Endothelial cell of umbilical vein (primary cell): ENCODE measurements at regions of chr21 and their contacts with region 1.

Region 1: DNA sequence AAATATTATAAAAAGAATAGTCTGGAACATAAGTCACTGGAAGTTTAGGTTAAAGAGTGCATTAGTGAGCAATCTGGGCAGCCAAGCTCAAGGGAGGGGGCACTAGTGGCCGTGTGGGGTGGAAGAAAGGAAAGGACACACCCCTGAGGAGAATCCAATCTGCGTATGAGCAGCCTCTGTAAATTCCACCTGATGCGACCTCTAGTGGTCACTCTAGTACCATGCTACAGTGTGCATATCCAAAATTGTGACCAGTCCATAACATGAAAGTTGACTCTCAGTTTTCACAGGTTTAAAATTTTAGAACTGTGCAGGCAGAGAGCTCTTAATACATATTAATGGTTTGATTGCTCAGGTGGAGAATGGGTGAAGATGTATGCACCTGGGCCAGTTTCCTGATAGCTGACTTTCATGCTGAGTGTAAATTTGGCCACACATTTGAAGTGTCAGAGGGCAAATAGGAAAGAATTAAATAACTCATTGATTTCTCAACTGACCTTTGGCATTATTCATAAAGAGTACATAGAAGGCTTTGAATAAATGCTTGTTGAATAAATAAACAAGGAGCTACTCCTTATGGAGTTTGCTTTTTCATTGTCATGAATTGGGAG is 105.9 kb upstream of the C21orf91 start:
- DNase-seq: peak; percentile 42
- H3K4me3 ChIP-seq: no peak overlapping the region
- H3K27ac ChIP-seq: no peak overlapping the region
- H3K4me1 ChIP-seq: no peaks in the 10 kb centered on the region
- H3K27me3 ChIP-seq: no peaks in the 10 kb centered on the region
- CTCF ChIP-seq: peak; percentile 79 to 80
- POLR2A ChIP-seq: no peak

Region 2: GRCh38 chr21:17679002-17679600 is 246.0 kb before region 1 on chr21:
- CTCF ChIA-PET with region 1: interaction called, 18 read pairs
- POLR2A ChIA-PET with region 1: no interaction called
- dilution Hi-C with region 1: no loop called
- intact Hi-C with region 1: loop called (anchors 1 kb)
- DNase-seq: peak; percentile 61
- H3K4me3 ChIP-seq: no peak overlapping the region
- H3K27ac ChIP-seq: no peak overlapping the region
- H3K4me1 ChIP-seq: no peaks in the 10 kb centered on the region
- H3K27me3 ChIP-seq: no peaks in the 10 kb centered on the region
- CTCF ChIP-seq: peak; percentile 55 to 57
- POLR2A ChIP-seq: no peak

Region 3: DNA sequence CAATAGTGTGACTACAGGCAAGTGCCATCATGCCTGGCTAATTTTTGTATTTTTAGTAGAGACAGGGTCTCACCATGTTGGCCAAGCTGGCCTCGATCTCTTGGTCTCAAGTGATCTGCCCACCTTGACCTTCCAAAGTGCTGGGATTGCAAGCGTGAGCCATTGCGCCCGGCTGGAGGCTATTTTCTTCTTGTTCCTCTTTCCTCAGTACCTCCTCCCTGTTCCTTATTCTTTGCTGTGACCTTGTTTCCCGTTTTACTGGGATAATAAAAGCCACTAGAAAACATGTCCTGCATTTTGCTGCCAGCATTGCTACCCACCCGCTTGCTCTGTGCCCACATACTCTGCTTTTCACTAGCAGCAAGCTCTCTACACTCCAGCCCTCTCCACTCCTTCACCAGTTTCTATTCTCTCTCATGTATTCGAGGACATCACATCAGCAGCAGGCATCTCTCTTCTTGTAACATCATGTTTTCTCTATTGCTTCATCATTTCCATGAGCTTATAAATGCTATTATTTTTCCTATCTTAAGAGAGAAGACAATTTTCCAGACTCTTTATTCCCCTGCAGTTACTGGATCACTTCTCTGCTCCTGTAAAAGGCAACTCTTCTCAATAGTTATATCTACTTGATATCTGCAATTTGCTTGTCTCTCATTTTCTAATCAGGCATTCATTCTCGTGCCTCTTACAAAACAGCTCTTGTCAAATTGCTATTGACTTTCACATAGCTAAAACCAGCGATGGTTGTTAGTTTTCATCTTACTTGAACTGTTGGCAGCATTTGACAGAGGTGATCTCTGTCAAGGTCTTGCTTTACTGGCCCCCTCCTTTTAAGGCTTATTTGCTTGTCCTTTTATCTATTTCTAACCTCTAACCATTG is 71.5 kb before region 1 on chr21:
- CTCF ChIA-PET with region 1: no interaction called
- POLR2A ChIA-PET with region 1: no interaction called
- dilution Hi-C with region 1: no loop called
- intact Hi-C with region 1: no loop called
- DNase-seq: no peak
- H3K4me3 ChIP-seq: no peak overlapping the region
- H3K27ac ChIP-seq: no peak overlapping the region
- H3K4me1 ChIP-seq: no peaks in the 10 kb centered on the region
- H3K27me3 ChIP-seq: no peaks in the 10 kb centered on the region
- CTCF ChIP-seq: no peak
- POLR2A ChIP-seq: no peak

Region 4: GRCh38 chr21:17889171-17889570 is 35.9 kb before region 1 on chr21:
- CTCF ChIA-PET with region 1: no interaction called
- POLR2A ChIA-PET with region 1: no interaction called
- dilution Hi-C with region 1: no loop called
- intact Hi-C with region 1: no loop called
- DNase-seq: no peak
- H3K4me3 ChIP-seq: no peak overlapping the region
- H3K27ac ChIP-seq: no peak overlapping the region
- H3K4me1 ChIP-seq: no peaks in the 10 kb centered on the region
- H3K27me3 ChIP-seq: no peaks in the 10 kb centered on the region
- CTCF ChIP-seq: no peak
- POLR2A ChIP-seq: no peak

Region 5: DNA sequence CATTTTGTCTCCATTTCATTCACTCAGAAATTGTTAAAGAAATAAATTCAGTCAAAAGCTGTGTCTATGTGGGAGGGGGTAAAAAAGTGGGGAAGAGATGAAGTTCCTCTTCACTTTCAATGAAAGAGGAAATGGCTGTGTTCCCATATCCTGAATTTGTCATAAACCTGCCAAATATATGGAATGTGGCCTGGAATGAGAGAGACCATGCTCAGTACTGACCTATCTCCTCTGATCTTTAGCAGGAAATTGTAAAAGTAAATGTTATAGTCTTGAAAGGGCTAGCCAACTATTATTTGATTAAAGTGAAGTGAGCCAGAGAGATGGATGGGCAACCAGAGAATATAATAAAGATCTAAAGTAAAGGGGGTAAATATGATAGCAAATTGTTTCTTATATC is 24.3 kb after region 1 on chr21:
- CTCF ChIA-PET with region 1: interaction called, 11 read pairs
- POLR2A ChIA-PET with region 1: no interaction called
- dilution Hi-C with region 1: no loop called
- intact Hi-C with region 1: no loop called
- DNase-seq: no peak
- H3K4me3 ChIP-seq: no peak overlapping the region
- H3K27ac ChIP-seq: no peak overlapping the region
- H3K4me1 ChIP-seq: no peaks in the 10 kb centered on the region
- H3K27me3 ChIP-seq: no peaks in the 10 kb centered on the region
- CTCF ChIP-seq: no peak
- POLR2A ChIP-seq: no peak

Region 6: DNA sequence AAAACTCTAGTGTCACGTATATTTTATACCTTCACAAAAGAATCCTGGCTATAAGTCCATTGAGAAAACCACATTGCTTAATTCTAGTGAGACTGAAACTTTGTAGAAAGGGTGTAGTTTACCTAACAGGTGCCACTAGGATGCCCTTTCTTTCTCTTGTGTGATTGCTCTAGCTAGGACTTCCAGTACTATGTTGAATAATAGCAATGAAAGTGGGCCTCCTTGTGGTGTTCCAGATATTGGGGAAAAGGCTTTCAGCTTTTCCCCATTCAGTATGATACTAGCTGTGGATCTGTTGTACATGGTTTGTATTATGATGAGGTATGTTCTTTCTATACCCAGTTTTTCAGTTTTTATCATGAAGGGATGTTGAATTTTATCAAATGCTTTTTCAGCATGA is 279.8 kb after region 1 on chr21:
- CTCF ChIA-PET with region 1: interaction called, 27 read pairs
- POLR2A ChIA-PET with region 1: no interaction called
- dilution Hi-C with region 1: no loop called
- intact Hi-C with region 1: loop called (anchors 1 kb)
- DNase-seq: peak; percentile 17
- H3K4me3 ChIP-seq: no peak overlapping the region
- H3K27ac ChIP-seq: no peak overlapping the region
- H3K4me1 ChIP-seq: no peaks in the 10 kb centered on the region
- H3K27me3 ChIP-seq: no peaks in the 10 kb centered on the region
- CTCF ChIP-seq: peak in 1 of 2 donors; percentile 24
- POLR2A ChIP-seq: no peak

Region 7: DNA sequence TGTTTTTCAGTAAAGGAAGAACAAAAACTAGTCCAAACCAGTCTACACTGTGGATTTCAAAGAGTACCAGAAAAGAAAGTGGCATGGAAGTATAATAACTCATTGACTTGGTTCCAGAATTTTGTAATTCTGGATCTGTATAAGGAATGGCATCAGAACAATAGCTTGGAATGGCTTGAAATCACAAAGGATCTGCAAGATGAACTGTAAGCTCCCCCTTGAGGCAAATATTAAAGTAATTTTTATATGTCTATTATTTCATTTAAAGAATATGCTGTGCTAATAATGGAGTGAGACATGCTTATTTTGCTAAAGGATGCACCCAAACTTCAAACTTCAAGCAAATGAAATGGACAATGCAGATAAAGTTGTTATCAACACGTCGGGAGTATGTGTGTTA is 340.8 kb after region 1 on chr21:
- CTCF ChIA-PET with region 1: interaction called, 15 read pairs
- POLR2A ChIA-PET with region 1: no interaction called
- dilution Hi-C with region 1: no loop called
- intact Hi-C with region 1: loop called (anchors 5 kb)
- DNase-seq: no peak
- H3K4me3 ChIP-seq: no peak overlapping the region
- H3K27ac ChIP-seq: no peak overlapping the region
- H3K4me1 ChIP-seq: no peaks in the 10 kb centered on the region
- H3K27me3 ChIP-seq: no peaks in the 10 kb centered on the region
- CTCF ChIP-seq: no peak
- POLR2A ChIP-seq: no peak

Region 8: DNA sequence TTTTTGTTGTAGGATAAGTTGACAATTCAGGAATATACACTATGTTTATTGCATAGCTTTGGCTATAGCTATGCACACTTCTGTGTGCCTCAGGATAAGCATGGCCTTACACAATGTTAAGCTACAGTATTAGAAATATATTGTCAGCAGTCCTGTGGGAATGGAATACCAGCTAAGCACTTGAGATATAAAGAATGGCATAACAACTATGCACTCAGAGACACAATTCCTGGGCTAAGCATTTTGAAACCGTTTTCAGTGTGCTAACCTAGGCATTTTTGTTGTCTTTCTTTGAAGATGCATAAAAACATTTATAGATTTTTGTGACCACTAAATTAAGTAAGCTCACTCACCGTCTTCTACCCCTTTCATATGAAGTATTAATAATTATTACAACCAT is 431.7 kb after region 1 on chr21:
- CTCF ChIA-PET with region 1: no interaction called
- POLR2A ChIA-PET with region 1: no interaction called
- dilution Hi-C with region 1: no loop called
- intact Hi-C with region 1: no loop called
- DNase-seq: no peak
- H3K4me3 ChIP-seq: no peak overlapping the region
- H3K27ac ChIP-seq: no peak overlapping the region
- H3K4me1 ChIP-seq: no peaks in the 10 kb centered on the region
- H3K27me3 ChIP-seq: no peaks in the 10 kb centered on the region
- CTCF ChIP-seq: no peak
- POLR2A ChIP-seq: no peak

Region 9: GRCh38 chr21:19109694-19110093 is 1184.6 kb after region 1 on chr21:
- CTCF ChIA-PET with region 1: no interaction called
- POLR2A ChIA-PET with region 1: no interaction called
- dilution Hi-C with region 1: no loop called
- intact Hi-C with region 1: no loop called
- DNase-seq: no peak
- H3K4me3 ChIP-seq: no peak overlapping the region
- H3K27ac ChIP-seq: no peak overlapping the region
- H3K4me1 ChIP-seq: no peaks in the 10 kb centered on the region
- H3K27me3 ChIP-seq: no peaks in the 10 kb centered on the region
- CTCF ChIP-seq: no peak
- POLR2A ChIP-seq: no peak